ENCODE measurements at regions of chr1 and their contacts with region 1.

Region 1: DNA sequence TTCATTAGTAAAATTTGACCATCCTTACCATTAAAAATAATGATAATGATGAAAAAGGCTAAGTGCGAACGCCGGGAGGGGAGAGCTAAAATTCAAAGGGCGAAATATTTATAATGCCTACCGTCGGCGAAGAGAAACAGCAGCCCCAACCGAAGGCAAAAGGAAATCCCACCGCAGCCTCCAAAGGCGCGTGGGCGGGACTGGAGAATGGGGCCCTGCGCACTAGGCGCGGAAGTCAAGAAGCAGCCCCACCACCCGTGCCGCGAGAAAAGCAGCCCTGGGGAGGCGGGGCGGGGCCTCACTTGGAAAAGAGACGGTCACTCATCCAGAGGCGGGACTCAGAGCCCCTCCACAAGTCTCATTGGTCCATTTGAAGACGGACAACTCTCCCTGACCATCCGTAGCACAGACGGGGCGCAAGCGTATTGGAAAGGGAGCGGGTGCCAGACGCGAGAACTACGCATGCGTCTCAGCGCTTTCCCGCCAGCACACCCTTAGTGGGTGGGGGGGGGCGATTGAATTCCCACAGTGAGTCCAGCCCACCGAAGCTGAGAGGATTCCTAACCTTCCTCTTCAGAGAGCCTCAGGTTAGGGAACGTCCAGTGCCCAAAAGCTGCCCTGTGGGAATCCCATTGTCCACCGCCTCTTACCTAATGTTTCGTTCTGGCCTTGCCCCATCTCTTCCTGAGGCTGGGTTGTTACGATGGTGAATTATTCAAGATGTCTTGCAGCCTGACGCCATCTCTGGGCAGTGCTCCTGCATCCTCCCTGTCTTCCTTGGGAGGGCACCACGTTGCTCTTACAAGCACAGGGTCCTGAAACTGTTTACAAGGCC is 19.0 kb downstream of the MTX1 start:
- DNase-seq: peak; percentile 99
- H3K4me3 ChIP-seq: peak overlapping the region; percentile 57 to 66
- H3K27ac ChIP-seq: peak overlapping the region; percentile 79
- H3K4me1 ChIP-seq: peaks cover 33% of the 10 kb centered on the region
- H3K27me3 ChIP-seq: no peaks in the 10 kb centered on the region
- CTCF ChIP-seq: peak in 1 of 3 experiments; percentile 3
- POLR2A ChIP-seq: peak in 1 of 2 donors; percentile 61

Region 2: GRCh38 chr1:155176544-155177071 is 50.9 kb before region 1 on chr1:
- intact Hi-C with region 1: loop called (anchors 5 kb)
- DNase-seq: peak; percentile 81 to 88
- H3K4me3 ChIP-seq: no peak overlapping the region
- H3K27ac ChIP-seq: no peak overlapping the region
- H3K4me1 ChIP-seq: peaks cover 34% of the 10 kb centered on the region
- H3K27me3 ChIP-seq: no peaks in the 10 kb centered on the region
- CTCF ChIP-seq: peak; percentile 83 to 91 (median 87)
- POLR2A ChIP-seq: no peak

Region 3: DNA sequence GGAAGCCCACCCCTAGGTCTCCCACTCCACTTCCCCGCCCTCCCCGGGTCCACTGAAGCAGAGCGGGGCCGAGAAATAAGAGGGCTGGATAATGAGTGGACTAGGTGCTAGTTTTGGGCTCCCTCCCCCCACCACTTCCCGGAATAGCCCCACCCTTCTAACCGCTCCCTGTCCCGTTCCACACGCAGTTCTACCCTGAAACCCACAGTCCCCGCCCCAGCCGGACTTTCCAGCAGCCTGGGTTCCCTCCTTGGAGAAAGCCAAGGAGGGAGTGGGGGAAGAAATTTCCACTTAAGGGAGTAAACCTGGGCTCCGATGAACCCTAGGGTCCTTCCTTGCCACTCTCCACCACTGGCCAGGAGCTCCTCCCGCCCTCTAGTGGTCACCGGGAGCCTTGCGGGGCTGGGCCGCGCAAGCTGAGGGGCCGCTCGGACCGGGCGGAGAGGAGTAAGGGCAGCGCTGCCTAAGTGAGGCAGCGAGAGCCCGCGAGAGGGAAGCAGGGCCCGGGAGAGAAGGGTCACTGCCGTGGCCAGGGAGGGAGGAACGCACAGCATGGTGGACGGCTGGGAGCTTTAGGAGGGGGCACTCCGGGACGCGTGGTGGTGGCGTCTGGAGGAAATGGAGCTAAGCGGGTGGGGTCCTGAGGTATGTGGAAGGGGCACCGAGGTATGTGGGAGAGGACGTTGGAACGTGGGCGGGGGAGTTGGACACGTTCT is 34.0 kb before region 1 on chr1:
- intact Hi-C with region 1: loop called (anchors 1 kb)
- DNase-seq: no peak
- H3K4me3 ChIP-seq: peak overlapping the region; percentile 52 to 58
- H3K27ac ChIP-seq: peak overlapping the region; percentile 85
- H3K4me1 ChIP-seq: peaks cover 39% of the 10 kb centered on the region
- H3K27me3 ChIP-seq: no peaks in the 10 kb centered on the region
- CTCF ChIP-seq: peak; percentile 79 to 96 (median 90)
- POLR2A ChIP-seq: no peak